K562 (cell line): ENCODE measurements at regions of chr6 and their contacts with region 1.

Region 1: DNA sequence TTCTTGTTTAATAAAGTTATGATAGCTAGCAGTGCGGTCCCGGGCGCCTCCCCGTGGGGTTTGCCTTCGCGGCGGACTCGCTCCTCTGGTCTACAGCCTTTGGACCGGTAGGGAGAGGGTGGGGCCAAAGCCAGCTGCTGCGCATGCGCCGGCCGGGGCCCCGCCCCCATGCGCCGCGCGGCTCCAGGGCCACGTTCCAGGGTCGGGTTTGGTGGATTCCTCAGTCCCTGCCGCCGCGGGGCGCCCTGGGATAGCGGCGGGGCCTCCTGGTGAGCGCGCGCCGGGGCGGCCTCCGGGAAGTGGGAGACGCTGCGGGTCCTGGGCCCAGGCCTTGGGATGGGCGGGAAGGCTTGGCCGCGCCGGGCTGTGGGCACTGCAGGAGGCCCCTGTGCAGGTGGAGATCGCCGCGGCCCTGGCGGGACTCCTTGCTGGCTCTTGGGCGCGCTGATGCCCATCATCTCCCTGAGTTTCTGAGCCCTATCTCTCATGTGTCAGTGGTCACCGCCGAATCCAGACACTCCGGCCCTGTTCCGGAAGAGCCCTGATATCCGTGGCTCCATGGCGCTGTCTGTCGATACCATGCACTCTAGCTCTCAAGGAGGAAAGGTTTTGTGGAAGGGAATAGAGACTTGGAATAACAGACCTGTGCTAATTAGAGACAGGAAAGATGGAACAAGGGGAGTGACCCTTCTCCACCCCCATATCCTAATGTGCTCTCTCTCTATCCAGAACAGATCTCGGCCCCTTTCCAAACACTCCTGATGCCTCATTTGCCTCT is at the start of gene VARS2:
- DNase-seq: peak; percentile 96 to 100 (median 99)
- ATAC-seq: peak; percentile 96
- H3K4me3 ChIP-seq: peak within 1 kb of the TSS; percentile 55
- H3K27ac ChIP-seq: peak within 1 kb of the TSS; percentile 89
- H3K4me1 ChIP-seq: peaks cover 16 to 28% of the 10 kb centered on the region in 2 experiments
- H3K27me3 ChIP-seq: no peaks in the 10 kb centered on the region
- CTCF ChIP-seq: peak; percentile 58 to 68 (median 59); a peak in 5 of 6 replicates
- EP300 ChIP-seq: peak; percentile 30; the same call in 1 of the 2 replicates
- POLR2A ChIP-seq: peak; percentile 88
- RAD21 ChIP-seq: peak; percentile 50 to 61
- polyA plus RNA-seq, gene VARS2: 1.6 to 2.3 TPM

Region 2: DNA sequence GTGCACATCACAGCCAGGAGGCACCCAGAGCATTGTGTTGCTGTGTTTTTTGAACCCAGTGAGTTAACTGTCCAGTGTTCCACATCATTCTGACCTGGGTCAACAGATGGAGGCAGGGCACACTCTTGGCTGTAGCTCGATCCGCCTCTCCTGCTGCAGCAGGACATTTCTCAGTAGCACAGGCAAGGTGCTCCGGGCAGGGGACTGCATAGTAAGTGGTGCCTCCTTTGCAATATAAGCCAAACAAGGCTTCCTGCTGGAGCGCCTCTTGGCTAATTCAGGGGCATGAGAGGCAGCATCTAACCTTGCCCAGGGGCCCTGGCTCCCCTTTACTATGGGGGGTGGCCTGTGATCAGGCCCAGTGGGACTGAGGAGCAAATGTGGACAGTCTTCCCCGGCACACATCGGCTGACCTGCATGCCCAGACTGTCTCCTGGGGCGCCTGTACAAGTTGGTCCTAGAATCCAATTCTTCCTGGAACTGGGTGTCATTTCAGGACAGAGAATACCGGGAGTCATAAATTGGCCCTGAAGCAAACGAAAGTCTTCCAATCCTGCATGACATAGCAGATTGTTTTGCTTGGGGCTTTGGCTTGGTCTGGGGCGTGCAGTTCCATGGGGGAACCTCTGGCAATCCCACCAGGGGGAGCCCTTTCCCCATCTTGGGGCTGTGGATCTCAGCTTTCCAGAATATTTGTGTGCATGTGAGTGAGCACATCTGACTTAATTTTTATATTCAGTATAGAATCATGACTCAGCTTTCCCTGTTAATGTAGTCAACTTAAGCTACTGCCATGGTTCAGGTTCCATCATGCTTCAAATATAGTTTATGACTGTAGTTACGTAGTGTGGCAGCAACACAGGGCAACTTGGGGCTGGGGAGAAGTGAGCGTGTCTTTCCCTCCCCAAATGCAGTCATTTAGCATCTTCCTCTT is 86.0 kb before region 1 on chr6:
- CTCF ChIA-PET with region 1: interaction called, 34 read pairs
- POLR2A ChIA-PET with region 1: interaction called, 6 read pairs
- in situ Hi-C with region 1: no loop called
- intact Hi-C with region 1: loop called (anchors 1 kb)
- DNase-seq: peak; percentile 92 to 95 (median 94)
- ATAC-seq: peak; percentile 97
- H3K4me3 ChIP-seq: no peak overlapping the region
- H3K27ac ChIP-seq: peak overlapping the region; percentile 76
- H3K4me1 ChIP-seq: peaks cover 11 to 23% of the 10 kb centered on the region in 2 experiments
- H3K27me3 ChIP-seq: no peaks in the 10 kb centered on the region
- CTCF ChIP-seq: peak; percentile 97 to 99 (median 99)
- EP300 ChIP-seq: peak; percentile 69
- POLR2A ChIP-seq: no peak
- RAD21 ChIP-seq: peak; percentile 100

Region 3: GRCh38 chr6:30926644-30927043 is 12.4 kb after region 1 on chr6:
- CTCF ChIA-PET with region 1: interaction called, 3 read pairs
- POLR2A ChIA-PET with region 1: interaction called, 11 read pairs
- in situ Hi-C with region 1: no loop called
- intact Hi-C with region 1: no loop called
- DNase-seq: no peak
- ATAC-seq: no peak
- H3K4me3 ChIP-seq: no peak overlapping the region
- H3K27ac ChIP-seq: no peak overlapping the region
- H3K4me1 ChIP-seq: peaks cover 0 to 15% of the 10 kb centered on the region in 2 experiments; a peak in 1 of 5 replicates
- H3K27me3 ChIP-seq: peaks cover 0 to 6% of the 10 kb centered on the region in 2 experiments; a peak in 2 of 5 replicates
- CTCF ChIP-seq: no peak
- EP300 ChIP-seq: no peak
- POLR2A ChIP-seq: no peak
- RAD21 ChIP-seq: no peak

Region 4: GRCh38 chr6:31042806-31043205 is 128.5 kb after region 1 on chr6:
- CTCF ChIA-PET with region 1: interaction called, 8 read pairs
- POLR2A ChIA-PET with region 1: interaction called, 3 read pairs
- in situ Hi-C with region 1: no loop called
- intact Hi-C with region 1: loop called (anchors 2 kb)
- DNase-seq: peak; percentile 54 to 75 (median 62)
- ATAC-seq: peak; percentile 86
- H3K4me3 ChIP-seq: no peak overlapping the region
- H3K27ac ChIP-seq: no peak overlapping the region
- H3K4me1 ChIP-seq: no peaks in the 10 kb centered on the region
- H3K27me3 ChIP-seq: peaks cover 34 to 61% of the 10 kb centered on the region in 2 experiments
- CTCF ChIP-seq: peak; percentile 71 to 86 (median 74)
- EP300 ChIP-seq: no peak
- POLR2A ChIP-seq: no peak
- RAD21 ChIP-seq: peak; percentile 60 to 77

Region 5: DNA sequence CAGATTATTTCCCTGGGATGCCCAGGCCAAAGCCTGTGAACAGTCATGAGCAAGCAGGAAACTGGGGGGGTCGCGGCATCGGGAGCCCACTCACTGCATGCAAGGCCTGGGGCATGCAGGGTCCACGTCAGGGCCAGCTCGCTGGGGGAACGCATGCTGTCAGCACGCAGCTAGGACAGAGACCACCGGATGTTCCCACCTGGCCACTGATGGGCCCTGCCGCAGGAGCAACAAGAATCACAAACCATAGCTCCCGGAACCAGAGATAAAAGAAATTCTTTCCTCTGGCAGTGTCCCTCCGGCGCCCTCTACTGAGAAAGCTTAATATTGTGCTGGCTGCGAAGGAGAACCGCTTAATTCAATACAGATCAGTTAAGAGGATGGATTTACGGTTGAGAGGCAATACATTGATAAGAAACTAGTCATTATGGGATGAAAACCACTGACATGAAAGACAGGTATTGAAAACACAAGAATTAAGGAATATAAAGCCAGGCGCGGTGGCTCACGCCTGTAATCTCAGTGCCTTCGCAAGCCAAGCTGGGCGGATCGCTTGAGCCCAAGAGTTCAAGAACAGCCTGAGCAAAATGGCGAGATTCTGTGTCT is 165.5 kb after region 1 on chr6:
- CTCF ChIA-PET with region 1: interaction called, 19 read pairs
- POLR2A ChIA-PET with region 1: interaction called, 7 read pairs
- in situ Hi-C with region 1: loop called (anchors 5 kb)
- intact Hi-C with region 1: no loop called
- DNase-seq: peak; percentile 43 to 79 (median 56)
- ATAC-seq: peak; percentile 80
- H3K4me3 ChIP-seq: no peak overlapping the region
- H3K27ac ChIP-seq: no peak overlapping the region
- H3K4me1 ChIP-seq: peaks cover 6% of the 10 kb centered on the region in 2 experiments; a peak in 4 of 5 replicates
- H3K27me3 ChIP-seq: no peaks in the 10 kb centered on the region
- CTCF ChIP-seq: peak; percentile 85 to 95 (median 89)
- EP300 ChIP-seq: 0 out of 2 replicates have a peak, but pooled peaks have one; percentile 44
- POLR2A ChIP-seq: no peak
- RAD21 ChIP-seq: peak; percentile 66 to 84

Region 6: DNA sequence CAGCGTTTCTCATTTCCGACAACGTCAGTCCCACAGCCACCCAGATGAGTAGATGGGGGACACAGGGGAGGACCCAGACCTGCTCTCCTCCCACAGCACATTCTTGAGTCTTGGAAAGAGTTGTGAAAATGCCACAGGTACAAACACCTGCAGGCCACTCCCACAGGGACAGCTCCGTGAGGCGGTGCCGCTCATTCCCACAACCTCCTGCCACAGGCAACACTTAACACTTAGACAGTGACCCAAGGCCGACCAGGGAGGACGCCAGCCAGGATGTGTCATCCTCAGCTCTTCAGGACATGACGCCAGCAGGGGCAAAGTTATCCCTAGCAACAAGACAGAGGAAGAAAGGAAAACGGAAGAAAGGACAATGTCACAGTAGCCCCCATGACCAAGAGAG is 465.6 kb after region 1 on chr6:
- CTCF ChIA-PET with region 1: no interaction called
- POLR2A ChIA-PET with region 1: no interaction called
- in situ Hi-C with region 1: loop called (anchors 10 kb)
- intact Hi-C with region 1: no loop called
- DNase-seq: no peak
- ATAC-seq: no peak
- H3K4me3 ChIP-seq: no peak overlapping the region
- H3K27ac ChIP-seq: no peak overlapping the region
- H3K4me1 ChIP-seq: no peaks in the 10 kb centered on the region
- H3K27me3 ChIP-seq: peaks cover 32 to 59% of the 10 kb centered on the region in 2 experiments
- CTCF ChIP-seq: no peak
- EP300 ChIP-seq: no peak
- POLR2A ChIP-seq: no peak
- RAD21 ChIP-seq: no peak